IMR-90 (cell line): ENCODE measurements at regions of chr2 and their contacts with region 1.

Region 1: GRCh38 chr2:61928826-61929461 is 23.5 kb downstream of the COMMD1 start:
- DNase-seq: peak; percentile 66
- ATAC-seq: peak; percentile 96
- H3K4me3 ChIP-seq: no peak overlapping the region
- H3K27ac ChIP-seq: peak overlapping the region; percentile 45; the same call in 1 of the 2 replicates
- H3K4me1 ChIP-seq: peaks cover 4% of the 10 kb centered on the region
- H3K27me3 ChIP-seq: no peaks in the 10 kb centered on the region
- CTCF ChIP-seq: no peak
- POLR2A ChIP-seq: no peak
- RAD21 ChIP-seq: no peak

Region 2: GRCh38 chr2:61799054-61799453 is 129.9 kb before region 1 on chr2:
- CTCF ChIA-PET with region 1: no interaction called
- POLR2A ChIA-PET with region 1: no interaction called
- dilution Hi-C with region 1: no loop called
- in situ Hi-C with region 1: no loop called
- intact Hi-C with region 1: no loop called
- DNase-seq: no peak
- ATAC-seq: no peak
- H3K4me3 ChIP-seq: no peak overlapping the region
- H3K27ac ChIP-seq: no peak overlapping the region
- H3K4me1 ChIP-seq: no peaks in the 10 kb centered on the region
- H3K27me3 ChIP-seq: peaks cover 4% of the 10 kb centered on the region
- CTCF ChIP-seq: no peak
- POLR2A ChIP-seq: no peak
- RAD21 ChIP-seq: no peak

Region 3: GRCh38 chr2:62339413-62339812 is 410.5 kb after region 1 on chr2:
- CTCF ChIA-PET with region 1: no interaction called
- POLR2A ChIA-PET with region 1: no interaction called
- dilution Hi-C with region 1: no loop called
- in situ Hi-C with region 1: no loop called
- intact Hi-C with region 1: loop called (anchors 1 kb)
- DNase-seq: no peak
- ATAC-seq: no peak
- H3K4me3 ChIP-seq: no peak overlapping the region
- H3K27ac ChIP-seq: no peak overlapping the region
- H3K4me1 ChIP-seq: no peaks in the 10 kb centered on the region
- H3K27me3 ChIP-seq: 0 out of 2 replicates have a peak, but pooled peaks cover 3% of the 10 kb centered on the region
- CTCF ChIP-seq: no peak
- POLR2A ChIP-seq: no peak
- RAD21 ChIP-seq: no peak